ENCODE measurements at regions of chr10 and their contacts with region 1.

Region 1: DNA sequence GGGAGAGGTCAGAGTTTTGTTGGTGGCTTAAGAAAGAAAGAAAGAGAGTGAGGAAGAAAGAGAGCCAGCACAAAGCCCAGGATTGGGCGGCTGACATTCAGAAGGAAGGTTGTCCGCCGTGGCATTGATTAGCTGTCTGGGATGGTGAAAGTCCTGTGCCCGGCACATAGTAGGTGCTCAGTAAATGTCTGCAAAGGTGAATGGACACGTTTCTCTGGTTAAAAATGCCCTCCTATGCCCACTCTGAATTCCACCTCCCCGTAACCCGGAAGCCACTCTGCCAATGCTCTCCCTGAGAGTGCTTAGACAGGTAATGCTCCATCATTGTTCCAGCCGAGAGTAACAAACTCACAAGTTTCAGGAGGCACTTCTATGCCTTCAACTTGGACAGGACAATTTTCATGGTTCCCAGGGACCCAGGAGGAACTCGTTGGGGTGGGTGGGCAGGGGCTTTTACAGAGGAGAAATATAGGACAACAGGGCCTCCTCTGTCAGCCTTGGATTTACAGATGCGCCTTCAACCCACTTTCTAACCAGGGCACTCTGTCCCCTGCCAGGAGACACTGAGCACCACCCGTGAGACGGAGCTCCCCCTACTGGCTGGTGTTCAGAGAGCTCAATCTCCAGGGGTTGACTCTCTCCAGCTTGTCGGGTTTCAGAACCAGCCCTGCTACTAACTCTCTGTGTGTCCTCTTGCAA is 411.5 kb upstream of the ZMIZ1 start:
- DNase-seq: peak; percentile 37 to 70 (median 48)
- ATAC-seq: peak; percentile 46
- H3K4me3 ChIP-seq: no peak overlapping the region
- H3K4me3 Mint-ChIP-seq: no peak overlapping the region
- H3K27ac ChIP-seq: no peak overlapping the region
- H3K27ac Mint-ChIP-seq: no peak overlapping the region
- H3K4me1 ChIP-seq: no peaks in the 10 kb centered on the region
- H3K4me1 Mint-ChIP-seq: no peaks in the 10 kb centered on the region
- H3K27me3 ChIP-seq: peaks cover 0 to 4% of the 10 kb centered on the region in 2 experiments
- H3K27me3 Mint-ChIP-seq: peaks cover 16% of the 10 kb centered on the region
- CTCF ChIP-seq: peak; percentile 58

Region 2: DNA sequence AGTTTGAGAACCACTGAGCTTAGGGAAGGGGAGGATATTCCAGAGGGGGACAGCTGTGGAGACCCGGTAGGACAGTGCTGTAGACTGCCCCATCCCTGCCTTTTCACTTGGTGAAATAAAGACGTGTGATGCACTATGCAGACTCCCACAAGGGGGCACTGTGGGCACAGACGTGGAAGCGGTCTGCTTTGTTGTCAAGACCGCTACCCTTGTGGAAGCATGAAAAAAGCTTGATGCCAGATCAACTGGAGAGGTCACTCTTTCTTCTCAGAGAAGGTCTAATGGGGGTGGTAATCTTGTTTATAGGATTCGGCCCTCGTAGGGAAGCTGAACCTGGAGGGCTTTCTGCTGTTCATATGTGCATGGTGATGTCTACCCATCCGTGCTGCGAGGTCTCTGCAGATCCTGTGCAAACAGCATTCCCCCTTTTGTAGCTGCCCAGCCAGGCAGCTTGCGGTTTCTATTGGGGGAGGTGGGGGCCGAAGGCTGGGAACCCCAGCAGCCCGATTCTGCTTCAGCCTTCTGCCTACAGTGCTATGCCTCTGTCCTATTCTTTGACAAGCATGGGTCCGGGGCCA is 609.9 kb before region 1 on chr10:
- CTCF ChIA-PET with region 1: interaction called, 7 read pairs
- POLR2A ChIA-PET with region 1: no interaction called
- intact Hi-C with region 1: loop called in 1 of 2 experiments (anchors 1 kb)
- DNase-seq: peak; percentile 70 to 87 (median 78)
- ATAC-seq: peak; percentile 94
- H3K4me3 ChIP-seq: no peak overlapping the region
- H3K4me3 Mint-ChIP-seq: no peak overlapping the region
- H3K27ac ChIP-seq: no peak overlapping the region
- H3K27ac Mint-ChIP-seq: no peak overlapping the region
- H3K4me1 ChIP-seq: peaks cover 14% of the 10 kb centered on the region
- H3K4me1 Mint-ChIP-seq: peaks cover 19% of the 10 kb centered on the region
- H3K27me3 ChIP-seq: no peaks in the 10 kb centered on the region
- H3K27me3 Mint-ChIP-seq: no peaks in the 10 kb centered on the region
- CTCF ChIP-seq: peak; percentile 86

Region 3: GRCh38 chr10:78255796-78256638 is 401.3 kb before region 1 on chr10:
- CTCF ChIA-PET with region 1: no interaction called
- POLR2A ChIA-PET with region 1: no interaction called
- intact Hi-C with region 1: loop called in 1 of 2 experiments (anchors 10 kb)
- DNase-seq: peak in 2 of 14 experiments; percentile 45 to 63
- ATAC-seq: no peak
- H3K4me3 ChIP-seq: no peak overlapping the region
- H3K4me3 Mint-ChIP-seq: no peak overlapping the region
- H3K27ac ChIP-seq: no peak overlapping the region
- H3K27ac Mint-ChIP-seq: no peak overlapping the region
- H3K4me1 ChIP-seq: no peaks in the 10 kb centered on the region
- H3K4me1 Mint-ChIP-seq: no peaks in the 10 kb centered on the region
- H3K27me3 ChIP-seq: no peaks in the 10 kb centered on the region
- H3K27me3 Mint-ChIP-seq: no peaks in the 10 kb centered on the region
- CTCF ChIP-seq: no peak

Measured in CD4-positive, alpha-beta T cell (primary cell).